ENCODE measurements at regions of chr20 and their contacts with region 1.

Region 1: DNA sequence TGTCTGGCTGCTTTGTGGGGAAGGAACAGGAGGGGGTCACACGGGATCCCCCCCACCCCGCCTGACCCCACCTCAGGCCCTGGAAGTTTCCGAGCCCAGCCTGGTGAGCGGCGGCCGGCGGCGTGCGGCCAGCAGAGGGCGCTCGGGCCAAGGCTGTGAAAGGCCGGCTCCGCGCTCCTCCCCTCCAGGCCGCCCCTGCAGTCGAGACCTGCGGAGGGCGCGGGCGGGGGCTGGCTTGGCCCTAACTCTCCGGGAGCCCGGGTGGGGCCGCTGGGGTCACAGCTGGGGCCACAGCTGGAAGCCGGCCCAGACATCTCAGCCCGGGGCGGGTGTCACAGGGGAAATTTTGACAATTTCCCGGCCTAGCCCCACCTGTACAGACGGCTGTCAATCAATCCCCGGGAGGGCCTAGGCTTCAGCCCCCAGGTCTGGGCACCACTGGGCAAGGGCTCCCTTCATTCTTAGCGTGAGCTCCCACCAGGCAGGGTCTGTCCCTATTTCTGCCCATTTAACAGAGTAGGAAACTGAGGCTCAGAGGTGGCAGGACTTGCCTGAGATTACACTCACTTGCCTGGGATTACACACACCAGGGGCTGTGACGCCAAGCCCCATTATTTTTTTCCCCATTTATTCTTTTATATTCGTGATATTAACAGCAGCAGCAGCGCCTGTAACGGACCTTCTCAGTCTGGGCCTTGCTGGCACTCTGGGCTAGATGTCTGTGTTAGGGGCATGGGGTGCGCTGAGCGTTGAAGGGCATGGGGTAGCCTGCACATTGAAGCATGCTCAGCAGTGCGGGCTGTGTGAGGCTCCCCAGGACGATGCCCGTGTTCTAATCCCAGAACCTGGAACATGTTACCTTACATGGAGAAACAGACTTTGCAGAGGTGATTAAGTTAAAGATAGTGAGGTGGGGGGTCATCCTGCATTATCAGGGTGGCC is 23.0 kb downstream of the ZBP1 start:
- DNase-seq: peak; percentile 59 to 86 (median 76)
- ATAC-seq: peak; percentile 89
- H3K4me3 ChIP-seq: no peak overlapping the region
- H3K4me3 Mint-ChIP-seq: peak overlapping the region in 4 of 10 donors; percentile 13 to 49 (median 20)
- H3K27ac ChIP-seq: no peak overlapping the region
- H3K27ac Mint-ChIP-seq: peak overlapping the region in 1 of 9 donors; percentile 78
- H3K4me1 ChIP-seq: peaks cover 3 to 4% of the 10 kb centered on the region in 2 donors
- H3K4me1 Mint-ChIP-seq: peaks cover 0 to 13% (median 4%) of the 10 kb centered on the region in 7 donors
- H3K27me3 ChIP-seq: no peaks in the 10 kb centered on the region
- H3K27me3 Mint-ChIP-seq: peaks cover 0 to 37% (median 0%) of the 10 kb centered on the region in 5 donors

Region 2: GRCh38 chr20:57383447-57384347 is 213.6 kb before region 1 on chr20:
- CTCF ChIA-PET with region 1: no interaction called
- POLR2A ChIA-PET with region 1: no interaction called
- intact Hi-C with region 1: loop called (anchors 1 to 2 kb)
- DNase-seq: no peak
- ATAC-seq: no peak
- H3K4me3 ChIP-seq: no peak overlapping the region
- H3K4me3 Mint-ChIP-seq: no peak overlapping the region
- H3K27ac ChIP-seq: no peak overlapping the region
- H3K27ac Mint-ChIP-seq: peak overlapping the region in 3 of 9 donors; percentile 45 to 77 (median 71)
- H3K4me1 ChIP-seq: peaks cover 6 to 12% of the 10 kb centered on the region in 2 donors
- H3K4me1 Mint-ChIP-seq: peaks cover 7 to 32% (median 20%) of the 10 kb centered on the region in 7 donors
- H3K27me3 ChIP-seq: no peaks in the 10 kb centered on the region
- H3K27me3 Mint-ChIP-seq: no peaks in the 10 kb centered on the region

Region 3: DNA sequence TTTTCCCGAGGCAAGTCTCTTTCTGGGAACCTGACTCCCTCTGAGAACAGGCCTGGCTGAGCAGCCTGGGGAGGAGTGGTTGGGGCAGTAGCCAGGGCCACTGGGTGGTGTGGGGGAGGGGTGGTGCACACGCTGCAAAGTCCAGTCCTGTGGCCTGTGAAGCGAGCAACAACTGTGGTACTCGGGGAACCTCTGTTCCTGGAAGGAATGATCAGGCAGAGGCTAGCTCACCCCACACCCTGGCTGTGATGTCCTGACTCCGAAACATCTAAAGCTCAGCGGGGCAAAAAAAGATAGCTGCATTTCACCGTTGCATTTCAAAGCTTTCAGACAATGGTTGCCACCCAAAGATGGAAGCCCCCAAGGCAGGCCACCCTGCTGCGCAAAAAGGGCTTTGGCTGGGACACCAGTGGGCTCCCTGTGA is 10.9 kb before region 1 on chr20:
- CTCF ChIA-PET with region 1: interaction called, 13 read pairs
- POLR2A ChIA-PET with region 1: no interaction called
- intact Hi-C with region 1: no loop called
- DNase-seq: no peak
- ATAC-seq: no peak
- H3K4me3 ChIP-seq: no peak overlapping the region
- H3K4me3 Mint-ChIP-seq: no peak overlapping the region
- H3K27ac ChIP-seq: no peak overlapping the region
- H3K27ac Mint-ChIP-seq: no peak overlapping the region
- H3K4me1 ChIP-seq: no peaks in the 10 kb centered on the region
- H3K4me1 Mint-ChIP-seq: peaks cover 0 to 5% (median 0%) of the 10 kb centered on the region in 7 donors
- H3K27me3 ChIP-seq: no peaks in the 10 kb centered on the region
- H3K27me3 Mint-ChIP-seq: peaks cover 24 to 48% (median 40%) of the 10 kb centered on the region in 5 donors

Region 4: GRCh38 chr20:57654363-57654997 is 57.2 kb after region 1 on chr20:
- CTCF ChIA-PET with region 1: interaction called, 12 read pairs
- POLR2A ChIA-PET with region 1: no interaction called
- intact Hi-C with region 1: loop called (anchors 1 kb)
- DNase-seq: peak in 8 of 9 donors; percentile 26 to 68 (median 59)
- ATAC-seq: peak; percentile 80
- H3K4me3 ChIP-seq: no peak overlapping the region
- H3K4me3 Mint-ChIP-seq: peak overlapping the region in 3 of 10 donors; percentile 2 to 46 (median 19)
- H3K27ac ChIP-seq: no peak overlapping the region
- H3K27ac Mint-ChIP-seq: peak overlapping the region in 5 of 9 donors; percentile 19 to 92 (median 56)
- H3K4me1 ChIP-seq: peaks cover 13 to 17% of the 10 kb centered on the region in 2 donors
- H3K4me1 Mint-ChIP-seq: peaks cover 14 to 42% (median 34%) of the 10 kb centered on the region in 7 donors
- H3K27me3 ChIP-seq: no peaks in the 10 kb centered on the region
- H3K27me3 Mint-ChIP-seq: peaks cover 0 to 11% (median 0%) of the 10 kb centered on the region in 5 donors

Region 5: DNA sequence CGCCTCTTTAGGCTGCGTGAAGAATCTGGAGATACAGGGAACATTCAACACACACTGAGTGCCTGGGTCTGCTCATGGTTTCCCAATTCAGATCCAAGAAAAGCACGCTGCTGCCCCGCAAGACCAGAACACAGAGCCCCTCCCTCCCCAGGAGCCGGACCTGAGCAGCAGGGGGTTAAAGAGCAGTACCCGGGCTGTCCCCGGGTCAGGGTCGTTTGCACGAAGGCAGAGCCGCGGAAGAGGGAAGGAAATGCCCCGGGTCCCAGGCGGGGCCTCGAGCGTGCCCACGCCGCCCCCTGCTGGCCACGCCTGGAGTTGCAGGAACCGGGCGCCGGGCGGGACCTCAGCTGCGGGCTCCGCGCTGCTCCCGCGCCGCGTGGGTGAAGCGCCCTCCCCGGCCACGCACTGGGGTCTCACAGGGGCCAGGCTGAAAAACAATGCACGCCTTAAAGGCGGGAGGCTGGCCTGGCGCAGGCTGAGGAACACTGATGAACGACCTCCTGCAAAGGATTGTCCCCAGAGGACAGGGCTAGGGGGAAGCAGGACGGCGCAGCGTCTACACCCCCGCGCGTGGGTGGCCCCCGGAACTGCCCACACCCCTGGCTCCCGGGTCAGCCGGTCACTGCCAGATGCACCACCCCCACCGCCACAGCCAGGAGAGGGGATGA is 582.3 kb after region 1 on chr20:
- CTCF ChIA-PET with region 1: interaction called, 12 read pairs
- POLR2A ChIA-PET with region 1: no interaction called
- intact Hi-C with region 1: loop called (anchors 1 kb)
- DNase-seq: peak; percentile 37 to 86 (median 71)
- ATAC-seq: peak; percentile 92
- H3K4me3 ChIP-seq: peak overlapping the region; percentile 54
- H3K4me3 Mint-ChIP-seq: peak overlapping the region; percentile 48 to 82 (median 71)
- H3K27ac ChIP-seq: no peak overlapping the region
- H3K27ac Mint-ChIP-seq: no peak overlapping the region
- H3K4me1 ChIP-seq: peaks cover 3 to 8% of the 10 kb centered on the region in 2 donors
- H3K4me1 Mint-ChIP-seq: peaks cover 0 to 17% (median 7%) of the 10 kb centered on the region in 7 donors
- H3K27me3 ChIP-seq: no peaks in the 10 kb centered on the region
- H3K27me3 Mint-ChIP-seq: peaks cover 9 to 28% (median 20%) of the 10 kb centered on the region in 5 donors

Measured in naive thymus-derived CD4-positive, alpha-beta T cell (primary cell).